H1 (cell line): ENCODE measurements at regions of chr14 and their contacts with region 1.

Region 1: GRCh38 chr14:50714450-50715073 is 46.5 kb upstream of the SAV1 start:
- DNase-seq: no peak
- H3K4me3 ChIP-seq: no peak overlapping the region
- H3K27ac ChIP-seq: no peak overlapping the region
- H3K4me1 ChIP-seq: peaks cover 0 to 2% (median 0%) of the 10 kb centered on the region in 4 experiments; a peak in 1 of 7 replicates
- H3K27me3 ChIP-seq: no peaks in the 10 kb centered on the region
- CTCF ChIP-seq: peak in 1 of 3 experiments; percentile 55; a peak in 2 of 4 replicates
- EP300 ChIP-seq: no peak
- POLR2A ChIP-seq: no peak
- RAD21 ChIP-seq: peak; percentile 50 to 60

Region 2: GRCh38 chr14:50697659-50698290 is 16.8 kb before region 1 on chr14:
- CTCF ChIA-PET with region 1: interaction called, 12 read pairs
- POLR2A ChIA-PET with region 1: no interaction called
- DNase-seq: no peak
- H3K4me3 ChIP-seq: no peak overlapping the region
- H3K27ac ChIP-seq: no peak overlapping the region
- H3K4me1 ChIP-seq: no peaks in the 10 kb centered on the region
- H3K27me3 ChIP-seq: no peaks in the 10 kb centered on the region
- CTCF ChIP-seq: no peak
- EP300 ChIP-seq: no peak
- POLR2A ChIP-seq: no peak
- RAD21 ChIP-seq: no peak

Region 3: DNA sequence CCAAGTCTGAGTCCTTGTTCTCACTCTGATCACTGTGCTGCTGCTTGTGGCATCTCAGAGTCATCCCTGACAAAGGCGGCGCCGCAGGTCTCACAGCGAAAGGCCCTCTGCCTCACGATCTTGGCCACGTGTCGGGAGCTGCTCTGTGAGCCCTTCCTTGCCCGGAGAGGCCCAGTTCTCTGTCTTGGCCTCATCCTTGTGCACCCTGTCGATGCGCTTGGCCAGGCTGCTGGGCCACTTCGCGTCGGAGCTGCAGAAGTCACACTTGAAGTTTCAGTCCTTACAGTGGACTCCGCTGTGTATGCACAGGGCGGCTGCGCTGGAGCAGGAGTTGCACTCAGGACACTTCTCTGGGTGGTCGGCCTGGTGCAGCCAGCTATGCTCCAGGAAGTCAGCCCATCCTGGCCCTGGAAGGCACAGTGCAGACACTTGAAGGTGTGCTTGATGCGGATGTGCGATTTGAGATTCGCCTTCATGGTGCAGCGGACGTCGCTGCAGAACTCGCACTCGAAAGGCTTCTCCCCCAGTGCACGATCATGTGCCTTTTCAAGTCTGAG is 10.0 kb before region 1 on chr14:
- CTCF ChIA-PET with region 1: interaction called, 17 read pairs
- POLR2A ChIA-PET with region 1: no interaction called
- DNase-seq: no peak
- H3K4me3 ChIP-seq: no peak overlapping the region
- H3K27ac ChIP-seq: no peak overlapping the region
- H3K4me1 ChIP-seq: no peaks in the 10 kb centered on the region; a peak in 1 of 7 replicates
- H3K27me3 ChIP-seq: no peaks in the 10 kb centered on the region
- CTCF ChIP-seq: no peak
- EP300 ChIP-seq: no peak
- POLR2A ChIP-seq: no peak
- RAD21 ChIP-seq: no peak

Region 4: GRCh38 chr14:50725761-50726160 is 11.2 kb after region 1 on chr14:
- CTCF ChIA-PET with region 1: interaction called, 19 read pairs
- POLR2A ChIA-PET with region 1: no interaction called
- DNase-seq: no peak
- H3K4me3 ChIP-seq: no peak overlapping the region
- H3K27ac ChIP-seq: no peak overlapping the region
- H3K4me1 ChIP-seq: no peaks in the 10 kb centered on the region
- H3K27me3 ChIP-seq: no peaks in the 10 kb centered on the region
- CTCF ChIP-seq: no peak
- EP300 ChIP-seq: no peak
- POLR2A ChIP-seq: no peak
- RAD21 ChIP-seq: no peak

Region 5: GRCh38 chr14:50741571-50741970 is 27.0 kb after region 1 on chr14:
- CTCF ChIA-PET with region 1: no interaction called
- POLR2A ChIA-PET with region 1: no interaction called
- DNase-seq: no peak
- H3K4me3 ChIP-seq: no peak overlapping the region
- H3K27ac ChIP-seq: no peak overlapping the region
- H3K4me1 ChIP-seq: no peaks in the 10 kb centered on the region
- H3K27me3 ChIP-seq: no peaks in the 10 kb centered on the region
- CTCF ChIP-seq: no peak
- EP300 ChIP-seq: no peak
- POLR2A ChIP-seq: no peak
- RAD21 ChIP-seq: no peak